Activated CD4-positive, alpha-beta T cell treated with anti-CD3 and anti-CD28 coated beads for 36 hours (primary cell): ENCODE measurements at regions of chr17 and their contacts with region 1.

Region 1: GRCh38 chr17:72373910-72374741 is 253.3 kb downstream of the SOX9 start:
- DNase-seq: no peak
- ATAC-seq: no peak
- H3K4me3 Mint-ChIP-seq: no peak overlapping the region
- H3K27ac Mint-ChIP-seq: no peak overlapping the region
- H3K4me1 Mint-ChIP-seq: no peaks in the 10 kb centered on the region
- H3K27me3 Mint-ChIP-seq: peaks cover 2% of the 10 kb centered on the region

Region 2: GRCh38 chr17:72069586-72070202 is 304.4 kb before region 1 on chr17:
- CTCF ChIA-PET with region 1: no interaction called
- POLR2A ChIA-PET with region 1: no interaction called
- intact Hi-C with region 1: loop called in 1 of 2 experiments (anchors 5 kb)
- DNase-seq: no peak
- ATAC-seq: no peak
- H3K4me3 Mint-ChIP-seq: no peak overlapping the region
- H3K27ac Mint-ChIP-seq: no peak overlapping the region
- H3K4me1 Mint-ChIP-seq: no peaks in the 10 kb centered on the region
- H3K27me3 Mint-ChIP-seq: peaks cover 1% of the 10 kb centered on the region